HepG2 (cell line): ENCODE measurements at regions of chr19 and their contacts with region 1.

Region 1: DNA sequence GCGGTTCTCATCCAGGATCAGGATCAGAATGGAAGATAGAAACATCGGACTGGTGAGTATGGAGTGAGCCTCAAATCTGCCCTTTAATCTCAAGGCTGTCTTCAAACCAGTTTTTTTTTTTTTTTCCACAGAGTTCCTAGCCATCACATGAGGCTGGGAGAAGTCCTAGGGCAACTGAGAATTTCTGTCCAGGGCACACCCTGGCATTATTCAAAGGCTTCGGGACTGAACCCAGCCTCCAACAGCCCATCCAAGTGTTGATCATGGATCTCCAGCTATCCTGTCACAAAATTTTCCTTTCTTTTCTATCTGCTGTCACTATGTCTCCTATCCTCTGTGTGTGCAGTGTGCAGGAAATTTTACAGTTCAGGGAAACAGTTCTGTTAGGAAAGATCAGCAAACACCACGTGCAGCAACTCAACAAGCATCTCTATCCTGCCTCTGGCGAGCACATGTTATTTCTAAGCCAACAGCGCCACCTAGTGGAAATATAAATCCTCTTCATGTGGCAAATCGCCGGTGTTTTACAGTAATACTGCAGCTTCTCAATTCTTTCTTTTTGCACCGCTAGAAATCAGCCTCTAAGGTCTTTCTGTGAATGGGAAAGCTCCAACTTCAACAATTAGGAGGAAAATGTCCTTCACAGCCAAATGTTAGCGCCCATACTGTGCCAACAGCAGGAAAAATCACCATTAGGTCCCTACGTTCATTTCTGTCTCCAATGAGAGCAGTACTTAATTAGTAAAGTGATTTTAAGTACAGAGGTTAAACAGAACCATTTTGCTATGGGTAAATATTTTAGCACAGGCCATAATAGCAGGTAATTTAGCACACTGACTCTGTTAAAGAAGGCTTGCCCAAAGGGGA is 21.4 kb upstream of the ZNF181 start:
- DNase-seq: peak; percentile 82
- ATAC-seq: peak; percentile 86
- H3K4me3 ChIP-seq: no peak overlapping the region
- H3K27ac ChIP-seq: no peak overlapping the region
- H3K4me1 ChIP-seq: no peaks in the 10 kb centered on the region
- H3K27me3 ChIP-seq: peaks cover 0 to 5% of the 10 kb centered on the region in 2 experiments; a peak in 1 of 5 replicates
- CTCF ChIP-seq: peak; percentile 90
- EP300 ChIP-seq: no peak
- POLR2A ChIP-seq: no peak
- RAD21 ChIP-seq: peak; percentile 85

Region 2: GRCh38 chr19:34501339-34502320 is 211.0 kb before region 1 on chr19:
- CTCF ChIA-PET with region 1: interaction called, 42 read pairs
- POLR2A ChIA-PET with region 1: no interaction called
- in situ Hi-C with region 1: loop called (anchors 10 kb)
- intact Hi-C with region 1: loop called (anchors 1 kb)
- DNase-seq: peak; percentile 76
- ATAC-seq: peak; percentile 82
- H3K4me3 ChIP-seq: no peak overlapping the region
- H3K27ac ChIP-seq: no peak overlapping the region
- H3K4me1 ChIP-seq: peaks cover 24% of the 10 kb centered on the region
- H3K27me3 ChIP-seq: no peaks in the 10 kb centered on the region
- CTCF ChIP-seq: peak; percentile 99
- EP300 ChIP-seq: no peak
- POLR2A ChIP-seq: no peak
- RAD21 ChIP-seq: peak; percentile 98

Region 3: GRCh38 chr19:34556488-34556887 is 156.1 kb before region 1 on chr19:
- CTCF ChIA-PET with region 1: interaction called, 10 read pairs
- POLR2A ChIA-PET with region 1: no interaction called
- in situ Hi-C with region 1: no loop called
- intact Hi-C with region 1: no loop called
- DNase-seq: peak; percentile 13
- ATAC-seq: peak; percentile 81
- H3K4me3 ChIP-seq: no peak overlapping the region
- H3K27ac ChIP-seq: no peak overlapping the region
- H3K4me1 ChIP-seq: no peaks in the 10 kb centered on the region
- H3K27me3 ChIP-seq: peaks cover 3 to 26% of the 10 kb centered on the region in 2 experiments; a peak in 3 of 5 replicates
- CTCF ChIP-seq: peak; percentile 71
- EP300 ChIP-seq: no peak
- POLR2A ChIP-seq: no peak
- RAD21 ChIP-seq: no peak

Region 4: GRCh38 chr19:34639491-34640085 is 73.0 kb before region 1 on chr19:
- CTCF ChIA-PET with region 1: interaction called, 45 read pairs
- POLR2A ChIA-PET with region 1: no interaction called
- in situ Hi-C with region 1: loop called (anchors 5 kb)
- intact Hi-C with region 1: loop called (anchors 1 kb)
- DNase-seq: peak; percentile 82
- ATAC-seq: peak; percentile 68
- H3K4me3 ChIP-seq: no peak overlapping the region
- H3K27ac ChIP-seq: no peak overlapping the region
- H3K4me1 ChIP-seq: peaks cover 24% of the 10 kb centered on the region
- H3K27me3 ChIP-seq: no peaks in the 10 kb centered on the region
- CTCF ChIP-seq: peak; percentile 84
- EP300 ChIP-seq: no peak
- POLR2A ChIP-seq: no peak
- RAD21 ChIP-seq: peak; percentile 74

Region 5: DNA sequence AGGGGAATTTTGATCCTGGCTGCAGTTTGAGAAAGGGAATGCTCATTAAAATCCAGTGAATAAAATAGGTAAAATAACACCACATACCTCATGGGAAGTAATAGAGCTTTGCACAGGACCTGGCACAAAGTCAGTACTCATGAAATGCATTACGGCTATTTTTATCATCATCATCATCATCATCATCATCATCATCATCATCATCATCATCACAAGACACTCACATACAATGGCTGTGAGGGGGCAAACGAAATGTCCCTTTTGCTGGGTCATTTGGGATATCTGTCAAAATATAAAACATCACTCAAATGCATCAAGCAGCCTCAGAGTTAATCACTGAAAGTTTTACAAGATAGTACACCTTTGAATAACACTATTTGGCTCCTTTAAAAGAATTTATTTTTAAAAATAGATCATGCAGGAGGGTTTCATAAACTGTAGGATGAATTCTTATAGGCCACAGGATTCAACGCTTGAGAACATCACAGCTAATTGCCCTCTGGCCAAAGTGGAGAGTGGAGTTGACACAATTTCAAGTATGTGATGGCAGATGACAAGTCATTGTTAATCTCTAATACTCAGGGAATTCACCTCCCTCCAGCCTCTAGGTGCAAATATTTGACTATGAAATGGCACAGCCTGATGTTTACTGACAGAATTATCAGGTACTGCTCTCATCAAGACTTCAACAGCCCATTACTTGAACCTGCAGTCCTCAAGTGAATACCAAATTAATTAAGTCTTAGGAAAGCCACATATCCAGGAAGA is 74.6 kb after region 1 on chr19:
- CTCF ChIA-PET with region 1: no interaction called
- POLR2A ChIA-PET with region 1: no interaction called
- in situ Hi-C with region 1: no loop called
- intact Hi-C with region 1: no loop called
- DNase-seq: no peak
- ATAC-seq: no peak
- H3K4me3 ChIP-seq: no peak overlapping the region
- H3K27ac ChIP-seq: no peak overlapping the region
- H3K4me1 ChIP-seq: no peaks in the 10 kb centered on the region
- H3K27me3 ChIP-seq: peaks cover 0 to 4% of the 10 kb centered on the region in 2 experiments; a peak in 1 of 5 replicates
- CTCF ChIP-seq: no peak
- EP300 ChIP-seq: no peak
- POLR2A ChIP-seq: no peak
- RAD21 ChIP-seq: no peak